OCI-LY7 (cell line): ENCODE measurements at regions of chr14 and their contacts with region 1.

Region 1: GRCh38 chr14:62126879-62127478 is 364.8 kb downstream of the SNAPC1 start:
- DNase-seq: peak; percentile 70
- H3K4me3 ChIP-seq: no peak overlapping the region
- H3K27ac ChIP-seq: no peak overlapping the region
- H3K4me1 ChIP-seq: peaks cover 3% of the 10 kb centered on the region
- CTCF ChIP-seq: peak; percentile 97

Region 2: DNA sequence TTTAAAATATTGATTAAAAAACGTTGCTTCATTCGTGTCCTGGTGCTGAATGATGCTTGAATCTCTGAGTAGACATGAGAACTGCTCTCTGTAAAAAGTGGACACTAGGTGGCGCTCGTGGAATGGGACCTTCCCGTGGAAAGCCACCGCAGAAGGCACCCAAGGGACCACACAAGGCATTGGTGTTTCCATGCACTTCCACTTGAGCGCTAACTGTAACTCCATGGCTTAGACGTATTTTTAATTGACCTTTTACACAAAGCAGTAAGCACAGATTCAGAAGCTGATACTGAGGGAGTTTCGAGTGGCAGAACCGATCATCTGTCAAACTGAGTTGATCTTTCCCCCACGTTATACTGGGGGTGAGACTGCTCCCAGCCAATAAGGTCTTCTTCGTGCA is 670.3 kb before region 1 on chr14:
- CTCF ChIA-PET with region 1: no interaction called
- POLR2A ChIA-PET with region 1: no interaction called
- intact Hi-C with region 1: loop called (anchors 5 kb)
- DNase-seq: peak; percentile 89
- H3K4me3 ChIP-seq: no peak overlapping the region
- H3K27ac ChIP-seq: no peak overlapping the region
- H3K4me1 ChIP-seq: peaks cover 6% of the 10 kb centered on the region
- CTCF ChIP-seq: peak; percentile 96

Region 3: DNA sequence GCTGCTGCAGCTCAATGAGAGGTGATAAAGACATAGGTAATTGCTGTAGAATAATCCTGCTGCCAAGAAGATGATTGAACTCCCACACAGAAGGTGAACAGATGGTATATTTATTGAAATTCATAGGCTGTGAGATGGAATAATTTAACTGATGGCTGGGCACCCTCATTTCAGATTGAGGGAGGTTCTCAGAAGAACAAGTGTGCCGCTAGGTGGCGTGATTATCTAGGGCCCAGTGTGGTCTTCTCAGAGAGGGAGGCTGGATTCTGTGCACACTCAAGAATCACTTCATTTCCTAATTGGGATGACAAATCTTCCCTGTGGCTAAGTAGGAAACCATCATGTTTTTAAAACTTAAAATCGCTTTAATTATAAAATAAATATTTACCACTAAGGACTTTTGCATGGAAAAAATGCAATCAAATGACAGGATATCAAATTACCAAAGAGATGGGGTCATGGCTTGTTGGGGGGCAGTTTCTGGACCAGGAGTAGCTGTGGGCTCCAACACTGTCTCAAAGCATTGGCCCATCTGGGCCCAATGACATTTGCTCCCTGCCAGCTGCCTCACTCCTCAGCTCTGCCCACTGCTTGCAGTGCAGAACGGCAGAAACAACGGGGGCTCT is 232.4 kb before region 1 on chr14:
- CTCF ChIA-PET with region 1: interaction called, 16 read pairs
- POLR2A ChIA-PET with region 1: interaction called, 6 read pairs
- intact Hi-C with region 1: loop called (anchors 1 kb)
- DNase-seq: peak; percentile 80
- H3K4me3 ChIP-seq: no peak overlapping the region
- H3K27ac ChIP-seq: no peak overlapping the region
- H3K4me1 ChIP-seq: peaks cover 6% of the 10 kb centered on the region
- CTCF ChIP-seq: peak; percentile 96

Region 4: DNA sequence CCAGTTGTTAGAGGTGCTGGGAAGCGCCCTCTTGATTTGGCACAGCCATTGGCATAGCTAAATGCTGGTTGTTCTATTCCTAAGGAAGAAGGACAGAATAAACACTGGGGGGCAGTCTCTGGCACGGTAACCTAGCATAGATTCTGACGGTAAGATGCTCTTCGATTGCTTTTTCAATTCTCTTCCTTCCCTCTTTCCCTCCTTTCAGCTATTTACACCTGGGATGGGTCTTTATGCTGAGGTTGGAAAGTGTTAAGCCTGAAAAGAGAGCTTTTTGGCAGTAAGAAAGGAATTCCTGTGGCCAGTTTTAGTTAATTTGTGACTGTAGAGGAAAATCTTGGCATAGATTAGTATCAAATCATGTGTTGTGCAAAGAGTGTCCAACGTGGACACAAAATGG is 201.9 kb before region 1 on chr14:
- CTCF ChIA-PET with region 1: interaction called, 6 read pairs
- POLR2A ChIA-PET with region 1: interaction called, 6 read pairs
- intact Hi-C with region 1: loop called (anchors 1 kb)
- DNase-seq: peak; percentile 43
- H3K4me3 ChIP-seq: no peak overlapping the region
- H3K27ac ChIP-seq: no peak overlapping the region
- H3K4me1 ChIP-seq: no peaks in the 10 kb centered on the region
- CTCF ChIP-seq: peak; percentile 73

Region 5: GRCh38 chr14:62301911-62302310 is 174.9 kb after region 1 on chr14:
- CTCF ChIA-PET with region 1: no interaction called
- POLR2A ChIA-PET with region 1: no interaction called
- intact Hi-C with region 1: no loop called
- DNase-seq: no peak
- H3K4me3 ChIP-seq: no peak overlapping the region
- H3K27ac ChIP-seq: no peak overlapping the region
- H3K4me1 ChIP-seq: no peaks in the 10 kb centered on the region
- CTCF ChIP-seq: no peak